ENCODE measurements at regions of chr17 and their contacts with region 1.

Region 1: GRCh38 chr17:42577532-42578281 is at the start of gene PSMC3IP:
- DNase-seq: peak; percentile 93 to 96 (median 94)
- H3K4me3 ChIP-seq: peak within 1 kb of the TSS; percentile 65
- H3K27ac ChIP-seq: peak within 1 kb of the TSS in 1 of 2 donors; percentile 78
- H3K4me1 ChIP-seq: peaks cover 4% of the 10 kb centered on the region
- H3K27me3 ChIP-seq: no peaks in the 10 kb centered on the region
- CTCF ChIP-seq: peak in 2 of 3 donors; percentile 15 to 46
- EP300 ChIP-seq: no peak
- POLR2A ChIP-seq: peak; percentile 39
- total RNA-seq, gene PSMC3IP: 1.4 to 5.3 (median 3.8) TPM

Region 2: DNA sequence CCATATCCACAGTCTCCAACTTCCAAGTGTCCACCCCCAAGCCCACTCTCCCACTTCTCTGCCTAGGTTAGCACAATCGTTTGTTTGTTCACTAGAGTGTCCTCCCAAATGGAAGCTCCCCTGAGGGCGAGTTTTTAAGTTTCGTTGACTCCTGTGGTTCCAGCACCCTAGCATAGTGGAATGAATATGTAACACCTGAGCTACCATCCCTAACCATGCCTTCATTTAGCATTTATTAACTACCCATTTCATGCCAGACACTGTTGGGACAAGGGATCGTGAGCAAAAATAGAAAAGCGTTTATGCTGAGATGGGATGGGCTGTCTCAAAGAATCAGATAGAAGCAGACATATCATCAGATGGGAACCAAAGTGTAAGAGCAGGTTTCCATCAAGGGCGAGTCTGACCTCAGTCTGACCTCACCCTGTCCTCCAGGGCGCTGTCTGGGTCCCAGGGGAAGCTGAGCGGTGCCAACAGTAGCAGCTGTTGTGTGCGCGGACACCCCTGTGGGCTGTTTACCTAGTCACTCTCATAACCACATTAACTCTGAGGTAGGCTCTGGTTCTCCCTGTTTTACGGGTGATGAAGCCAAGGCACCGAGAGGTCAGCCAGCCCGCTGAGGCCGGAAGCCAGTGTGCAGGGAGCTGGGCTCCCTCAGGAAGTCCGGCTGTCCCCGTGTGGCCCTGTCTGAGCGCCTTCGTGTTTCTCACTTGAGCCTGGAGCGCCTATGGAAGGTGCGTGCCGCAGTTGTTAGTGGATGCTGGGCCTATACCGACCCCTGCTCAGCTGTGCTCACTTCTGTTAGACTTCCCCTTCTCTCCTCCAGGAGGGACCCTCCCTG is 604.9 kb before region 1 on chr17:
- intact Hi-C with region 1: loop called in 1 of 4 experiments (anchors 5 kb)
- DNase-seq: peak; percentile 47 to 74 (median 49)
- H3K4me3 ChIP-seq: no peak overlapping the region
- H3K27ac ChIP-seq: peak overlapping the region; percentile 11 to 76
- H3K4me1 ChIP-seq: peaks cover 6% of the 10 kb centered on the region
- H3K27me3 ChIP-seq: no peaks in the 10 kb centered on the region
- CTCF ChIP-seq: no peak
- EP300 ChIP-seq: no peak
- POLR2A ChIP-seq: no peak

Region 3: DNA sequence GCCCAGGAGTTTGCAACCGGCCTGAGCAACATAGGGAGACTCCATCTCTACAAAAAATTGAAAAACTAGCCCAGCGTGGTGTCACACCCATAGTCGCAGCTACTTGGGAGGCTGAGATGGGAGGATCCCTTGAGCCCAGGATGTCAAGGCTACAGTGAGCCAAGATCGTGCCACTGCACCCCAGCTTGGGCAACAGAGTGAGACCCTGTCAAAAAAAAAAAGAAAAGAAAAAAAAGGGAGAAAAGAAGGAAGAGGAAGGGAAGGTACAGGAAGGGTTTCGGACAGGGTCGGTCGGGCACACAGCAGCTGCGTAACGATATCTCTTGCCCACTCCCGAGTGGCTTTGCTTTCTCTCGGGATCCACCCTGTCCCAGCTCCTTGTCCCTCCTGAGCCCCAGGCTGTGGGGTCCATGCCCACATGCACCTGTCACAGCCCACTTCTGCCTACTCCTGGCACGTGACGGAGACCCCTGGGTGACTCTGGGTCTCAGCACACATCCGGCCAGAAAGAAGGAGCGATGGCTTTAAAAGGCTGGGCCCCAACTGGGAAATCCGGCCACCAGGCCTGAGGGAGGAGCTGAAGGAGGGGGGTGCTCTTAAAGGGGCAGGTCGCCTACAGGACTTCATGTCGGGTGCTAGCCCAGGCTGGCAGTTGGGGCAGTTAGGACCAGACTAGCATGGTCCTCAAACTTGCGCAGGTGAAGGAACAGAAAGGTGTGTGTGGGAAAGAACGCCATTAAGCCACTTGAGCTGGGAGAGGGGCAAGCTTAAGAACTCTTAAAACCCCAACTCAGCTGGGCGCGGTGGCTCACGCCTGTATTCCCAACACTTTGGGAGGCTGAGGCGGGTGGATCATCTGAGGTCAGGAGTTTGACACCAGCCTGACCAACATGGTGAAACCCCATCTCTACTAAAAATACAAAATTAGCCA is 383.5 kb before region 1 on chr17 and contains the start of gene GHDC:
- intact Hi-C with region 1: no loop called
- DNase-seq: peak; percentile 77 to 86 (median 83)
- H3K4me3 ChIP-seq: peak within 1 kb of the TSS; percentile 70
- H3K27ac ChIP-seq: peak within 1 kb of the TSS; percentile 3 to 12
- H3K4me1 ChIP-seq: peaks cover 10% of the 10 kb centered on the region
- H3K27me3 ChIP-seq: no peaks in the 10 kb centered on the region
- CTCF ChIP-seq: no peak
- EP300 ChIP-seq: no peak
- POLR2A ChIP-seq: peak; percentile 35
- total RNA-seq, gene GHDC: 19.5 to 40.1 (median 31.0) TPM

Region 4: GRCh38 chr17:42618442-42619150 is 40.9 kb after region 1 on chr17:
- intact Hi-C with region 1: no loop called
- DNase-seq: peak in 3 of 5 donors; percentile 20 to 42 (median 20)
- H3K4me3 ChIP-seq: no peak overlapping the region
- H3K27ac ChIP-seq: no peak overlapping the region
- H3K4me1 ChIP-seq: peaks cover 5% of the 10 kb centered on the region
- H3K27me3 ChIP-seq: no peaks in the 10 kb centered on the region
- CTCF ChIP-seq: no peak
- EP300 ChIP-seq: no peak
- POLR2A ChIP-seq: no peak